PC-3 (cell line): ENCODE measurements at regions of chr18 and their contacts with region 1.

Region 1: DNA sequence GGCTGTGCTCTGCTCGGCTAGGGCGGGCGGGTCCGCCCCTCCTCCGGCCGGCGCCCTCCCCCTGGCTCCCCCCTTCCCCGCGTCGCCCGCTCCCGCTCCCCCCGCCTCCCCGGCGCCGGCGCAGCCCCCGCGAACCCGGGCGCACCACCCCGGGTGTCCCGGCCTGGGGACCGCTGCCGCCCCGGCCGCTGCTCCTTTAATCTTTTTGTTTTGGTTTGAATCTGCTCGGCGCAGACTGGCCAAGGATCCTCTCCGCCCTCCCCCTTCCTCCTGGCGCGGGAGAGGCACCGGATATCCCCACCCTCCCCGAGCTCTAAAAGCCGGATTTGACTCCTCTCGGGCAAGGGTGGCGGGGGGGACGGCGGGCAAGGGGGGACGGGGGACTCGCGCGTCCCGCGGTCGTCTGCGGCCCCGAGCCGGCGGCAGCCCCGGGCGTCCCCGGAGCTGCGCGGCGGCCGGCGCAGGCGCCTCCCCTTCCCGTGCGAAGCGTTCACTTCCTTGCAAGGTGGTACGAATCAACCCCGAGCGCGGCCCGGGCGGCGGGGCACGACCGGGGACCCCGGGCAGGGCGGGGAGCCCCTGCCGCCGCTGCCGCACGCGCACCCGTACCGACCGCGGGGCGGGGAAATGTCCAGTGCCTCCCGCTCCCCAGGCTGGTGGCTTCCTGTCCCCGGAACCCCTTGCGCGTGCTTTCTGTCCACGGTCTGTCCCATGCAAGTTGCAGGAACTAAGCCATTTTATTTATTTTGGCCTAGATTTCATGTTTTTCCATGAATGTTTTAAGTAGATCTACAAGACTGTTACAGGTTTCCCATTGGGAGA is at the start of gene PTGR3:
- DNase-seq: peak; percentile 84
- ATAC-seq: peak; percentile 56
- H3K4me3 ChIP-seq: peak within 1 kb of the TSS; percentile 92
- H3K27ac ChIP-seq: peak within 1 kb of the TSS; percentile 89
- H3K4me1 ChIP-seq: peaks cover 38% of the 10 kb centered on the region
- H3K27me3 ChIP-seq: no peaks in the 10 kb centered on the region
- CTCF ChIP-seq: no peak
- total RNA-seq, gene PTGR3: 8.2 and 8.3 TPM in 2 replicates

Region 2: DNA sequence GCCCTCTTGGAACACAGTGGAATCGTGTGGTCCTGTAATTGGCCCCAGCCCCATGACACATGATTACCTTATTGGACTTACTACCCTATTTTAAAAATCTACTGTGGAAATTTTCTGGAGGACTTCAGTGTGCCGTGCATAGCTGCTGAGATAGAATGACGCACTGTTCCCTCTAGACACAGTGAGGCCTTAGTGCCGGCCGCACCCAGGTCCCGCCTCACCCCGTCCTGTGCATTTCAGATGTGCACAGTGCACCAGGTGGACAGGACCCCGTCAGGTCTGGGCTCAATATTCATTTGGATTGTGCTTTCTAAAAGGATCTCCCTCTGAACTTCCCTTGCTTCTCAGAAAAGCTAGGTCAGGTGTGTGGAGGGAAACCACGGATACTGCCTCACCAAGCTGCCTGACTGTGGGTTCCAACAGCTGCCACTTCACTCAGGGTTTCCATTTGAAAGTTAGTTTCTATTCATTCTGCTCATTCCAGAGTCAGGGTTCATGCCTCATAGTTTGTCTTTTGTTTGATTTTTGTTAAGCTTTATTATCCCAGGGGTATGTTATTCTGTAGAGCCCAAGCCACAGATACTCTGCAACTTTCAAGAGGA is 156.2 kb before region 1 on chr18:
- CTCF ChIA-PET with region 1: no interaction called
- POLR2A ChIA-PET with region 1: interaction called, 13 read pairs
- intact Hi-C with region 1: no loop called
- DNase-seq: no peak
- ATAC-seq: no peak
- H3K4me3 ChIP-seq: no peak overlapping the region
- H3K27ac ChIP-seq: no peak overlapping the region
- H3K4me1 ChIP-seq: peaks cover 16% of the 10 kb centered on the region
- H3K27me3 ChIP-seq: no peaks in the 10 kb centered on the region
- CTCF ChIP-seq: no peak

Region 3: GRCh38 chr18:75070625-75071483 is 138.5 kb before region 1 on chr18:
- CTCF ChIA-PET with region 1: no interaction called
- POLR2A ChIA-PET with region 1: no interaction called
- intact Hi-C with region 1: loop called (anchors 1 kb)
- DNase-seq: peak; percentile 95
- ATAC-seq: peak; percentile 91
- H3K4me3 ChIP-seq: peak overlapping the region; percentile 62
- H3K27ac ChIP-seq: peak overlapping the region; percentile 87
- H3K4me1 ChIP-seq: peaks cover 26% of the 10 kb centered on the region
- H3K27me3 ChIP-seq: no peaks in the 10 kb centered on the region
- CTCF ChIP-seq: no peak

Region 4: GRCh38 chr18:75247611-75248421 is 38.5 kb after region 1 on chr18:
- CTCF ChIA-PET with region 1: interaction called, 8 read pairs
- POLR2A ChIA-PET with region 1: no interaction called
- intact Hi-C with region 1: loop called (anchors 5 kb)
- DNase-seq: peak; percentile 15
- ATAC-seq: peak; percentile 63
- H3K4me3 ChIP-seq: peak overlapping the region; percentile 71
- H3K27ac ChIP-seq: no peak overlapping the region
- H3K4me1 ChIP-seq: peaks cover 16% of the 10 kb centered on the region
- H3K27me3 ChIP-seq: no peaks in the 10 kb centered on the region
- CTCF ChIP-seq: no peak